Breast epithelium (tissue), 4 donors: ENCODE measurements at regions of chr3 and their contacts with region 1.

Region 1: GRCh38 chr3:14410503-14411165 is 8.2 kb downstream of the SLC6A6 start:
- DNase-seq: no peak
- H3K4me3 ChIP-seq: no peak overlapping the region
- H3K27ac ChIP-seq: peak overlapping the region in 1 of 2 donors; percentile 35
- H3K4me1 ChIP-seq: no peaks in the 10 kb centered on the region
- H3K27me3 ChIP-seq: no peaks in the 10 kb centered on the region
- CTCF ChIP-seq: no peak
- POLR2A ChIP-seq: no peak

Region 2: GRCh38 chr3:14431892-14432834 is 21.5 kb after region 1 on chr3:
- intact Hi-C with region 1: no loop called
- DNase-seq: peak; percentile 80 to 83
- H3K4me3 ChIP-seq: no peak overlapping the region
- H3K27ac ChIP-seq: peak overlapping the region; percentile 66 to 84
- H3K4me1 ChIP-seq: peaks cover 4 to 24% of the 10 kb centered on the region in 2 donors
- H3K27me3 ChIP-seq: no peaks in the 10 kb centered on the region
- CTCF ChIP-seq: no peak
- POLR2A ChIP-seq: no peak

Region 3: DNA sequence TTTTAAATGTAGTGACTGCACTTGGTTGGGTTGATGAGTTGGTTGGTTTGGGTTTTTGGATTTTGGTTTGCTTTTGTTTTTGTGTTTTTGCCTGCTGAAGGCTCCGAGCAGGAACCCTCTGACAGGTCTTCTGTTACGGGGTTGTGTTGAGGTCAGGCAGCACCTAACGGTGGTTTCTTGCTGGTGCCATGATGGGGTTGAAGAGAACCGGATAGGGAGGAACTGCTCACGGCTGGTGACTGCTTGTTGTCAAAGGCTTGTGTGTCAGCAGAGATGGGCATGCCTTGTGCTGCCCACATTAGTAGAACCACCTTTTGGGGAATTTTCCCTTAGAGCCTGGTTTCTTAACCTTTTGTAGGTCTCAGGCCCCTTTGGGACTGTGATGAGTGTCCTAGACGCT is 33.7 kb after region 1 on chr3:
- intact Hi-C with region 1: loop called (anchors 1 kb)
- DNase-seq: no peak
- H3K4me3 ChIP-seq: no peak overlapping the region
- H3K27ac ChIP-seq: no peak overlapping the region
- H3K4me1 ChIP-seq: peaks cover 2 to 8% of the 10 kb centered on the region in 2 donors
- H3K27me3 ChIP-seq: no peaks in the 10 kb centered on the region
- CTCF ChIP-seq: no peak
- POLR2A ChIP-seq: no peak